Heart left ventricle (tissue), 16 donors: ENCODE measurements at regions of chr1 and their contacts with region 1.

Region 1: DNA sequence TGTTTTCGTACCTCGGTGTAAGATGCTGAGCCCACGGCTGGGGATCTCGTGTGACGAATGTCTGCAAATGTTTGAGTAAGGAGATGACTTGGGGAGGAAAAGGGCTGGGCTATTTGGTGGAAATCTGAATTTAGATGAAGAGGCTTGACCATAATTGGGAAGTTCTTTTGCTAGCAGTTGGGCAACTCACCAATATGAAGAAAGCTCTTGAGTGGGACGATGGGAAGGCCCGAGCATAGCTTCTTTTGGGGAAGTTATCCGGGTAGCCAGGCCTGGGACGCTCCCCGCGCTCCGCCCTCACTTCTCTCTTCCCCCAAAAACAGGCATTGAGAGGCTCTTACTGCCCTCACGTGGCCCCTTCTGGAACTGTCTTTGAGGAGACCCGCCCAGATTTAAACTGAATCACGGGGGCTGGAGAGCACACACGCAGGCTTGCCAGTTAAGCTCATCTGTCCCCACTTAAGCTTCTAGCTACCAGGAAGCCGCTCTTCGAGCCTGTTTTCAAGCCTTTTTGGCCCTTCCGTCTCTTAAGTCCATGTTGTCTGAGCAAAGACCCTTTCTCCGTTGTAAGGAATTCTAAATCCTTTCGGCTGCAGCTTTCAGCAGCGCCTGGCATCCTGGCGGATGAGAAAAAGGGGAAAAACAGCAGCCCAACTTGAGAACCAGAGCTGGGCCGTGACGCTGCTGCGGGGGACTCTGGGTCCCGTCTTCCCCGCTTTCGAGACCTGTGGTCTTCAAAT is 93.1 kb downstream of the NID1 start:
- DNase-seq: peak; percentile 90 to 94 (median 92)
- ATAC-seq: peak; percentile 89 to 96 (median 95)
- H3K4me3 ChIP-seq: peak overlapping the region in 10 of 12 donors; percentile 25 to 58 (median 48)
- H3K27ac ChIP-seq: peak overlapping the region; percentile 77 to 95 (median 90)
- H3K4me1 ChIP-seq: peaks cover 0 to 23% (median 15%) of the 10 kb centered on the region in 12 donors
- H3K27me3 ChIP-seq: no peaks in the 10 kb centered on the region
- CTCF ChIP-seq: peak; percentile 78 to 94 (median 88)
- POLR2A ChIP-seq: peak in 1 of 2 donors; percentile 38

Region 2: DNA sequence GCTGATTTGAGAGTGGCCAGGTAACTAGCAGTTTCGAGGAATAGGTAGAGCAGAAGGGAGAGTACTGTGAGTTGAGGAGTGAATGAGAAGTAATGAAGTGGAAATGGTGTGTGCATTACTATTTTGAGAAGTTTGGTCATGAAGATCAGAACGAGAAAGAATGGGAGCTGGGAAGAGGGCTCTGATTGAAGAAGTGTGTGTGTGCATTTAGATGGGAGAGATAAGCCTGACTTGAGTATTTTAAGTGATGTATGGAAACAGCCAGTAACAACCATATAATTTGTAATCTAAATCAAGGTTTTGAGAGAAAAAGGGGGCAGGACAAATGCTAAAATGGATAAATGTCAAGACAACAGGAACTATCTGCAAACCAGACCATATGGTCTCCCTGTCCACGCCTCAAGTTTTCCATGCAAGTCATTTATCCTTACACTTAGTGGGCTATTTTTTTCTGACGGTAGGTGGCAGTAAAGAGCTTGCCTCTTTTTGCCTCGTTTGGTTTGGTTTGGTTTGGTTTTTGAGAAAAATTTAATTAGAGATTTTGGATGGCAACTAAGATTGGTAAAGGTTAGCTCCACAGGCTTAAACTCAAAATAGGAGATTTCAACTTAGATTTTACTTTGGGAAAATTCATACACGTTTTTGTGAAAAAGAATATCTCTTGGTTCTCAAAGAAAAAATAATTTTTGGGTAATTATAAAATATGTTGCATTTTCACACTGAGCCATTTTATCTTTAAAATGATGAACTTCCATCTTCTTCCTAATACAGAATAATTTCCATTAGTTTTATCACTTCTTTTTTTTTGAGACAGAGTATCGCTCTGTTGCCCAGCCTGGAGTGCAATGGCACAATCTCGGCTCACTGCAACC is 458.0 kb before region 1 on chr1:
- intact Hi-C with region 1: loop called in 6 of 10 experiments (anchors 5 to 10 kb)
- DNase-seq: peak in 2 of 5 donors; percentile 19 to 23
- ATAC-seq: peak in 1 of 4 donors; percentile 56
- H3K4me3 ChIP-seq: no peak overlapping the region
- H3K27ac ChIP-seq: no peak overlapping the region
- H3K4me1 ChIP-seq: no peaks in the 10 kb centered on the region
- H3K27me3 ChIP-seq: no peaks in the 10 kb centered on the region
- CTCF ChIP-seq: peak; percentile 81 to 95 (median 92)
- POLR2A ChIP-seq: no peak

Region 3: GRCh38 chr1:235866913-235867845 is 104.6 kb before region 1 on chr1:
- intact Hi-C with region 1: loop called in 6 of 10 experiments (anchors 1 to 10 kb)
- DNase-seq: peak; percentile 95 to 99 (median 96)
- ATAC-seq: peak; percentile 94 to 99 (median 98)
- H3K4me3 ChIP-seq: peak overlapping the region; percentile 76 to 99 (median 93)
- H3K27ac ChIP-seq: peak overlapping the region; percentile 83 to 98 (median 94)
- H3K4me1 ChIP-seq: peaks cover 0 to 47% (median 22%) of the 10 kb centered on the region in 12 donors
- H3K27me3 ChIP-seq: no peaks in the 10 kb centered on the region
- CTCF ChIP-seq: no peak
- POLR2A ChIP-seq: peak; percentile 20 to 90

Region 4: GRCh38 chr1:235910357-235911299 is 61.1 kb before region 1 on chr1:
- intact Hi-C with region 1: loop called in 1 of 10 experiments (anchors 5 kb)
- DNase-seq: peak in 2 of 5 donors; percentile 37 to 62
- ATAC-seq: peak; percentile 42 to 92 (median 72)
- H3K4me3 ChIP-seq: no peak overlapping the region
- H3K27ac ChIP-seq: peak overlapping the region in 4 of 12 donors; percentile 1 to 73 (median 22)
- H3K4me1 ChIP-seq: peaks cover 0 to 24% (median 0%) of the 10 kb centered on the region in 12 donors
- H3K27me3 ChIP-seq: no peaks in the 10 kb centered on the region
- CTCF ChIP-seq: no peak
- POLR2A ChIP-seq: no peak

Region 5: DNA sequence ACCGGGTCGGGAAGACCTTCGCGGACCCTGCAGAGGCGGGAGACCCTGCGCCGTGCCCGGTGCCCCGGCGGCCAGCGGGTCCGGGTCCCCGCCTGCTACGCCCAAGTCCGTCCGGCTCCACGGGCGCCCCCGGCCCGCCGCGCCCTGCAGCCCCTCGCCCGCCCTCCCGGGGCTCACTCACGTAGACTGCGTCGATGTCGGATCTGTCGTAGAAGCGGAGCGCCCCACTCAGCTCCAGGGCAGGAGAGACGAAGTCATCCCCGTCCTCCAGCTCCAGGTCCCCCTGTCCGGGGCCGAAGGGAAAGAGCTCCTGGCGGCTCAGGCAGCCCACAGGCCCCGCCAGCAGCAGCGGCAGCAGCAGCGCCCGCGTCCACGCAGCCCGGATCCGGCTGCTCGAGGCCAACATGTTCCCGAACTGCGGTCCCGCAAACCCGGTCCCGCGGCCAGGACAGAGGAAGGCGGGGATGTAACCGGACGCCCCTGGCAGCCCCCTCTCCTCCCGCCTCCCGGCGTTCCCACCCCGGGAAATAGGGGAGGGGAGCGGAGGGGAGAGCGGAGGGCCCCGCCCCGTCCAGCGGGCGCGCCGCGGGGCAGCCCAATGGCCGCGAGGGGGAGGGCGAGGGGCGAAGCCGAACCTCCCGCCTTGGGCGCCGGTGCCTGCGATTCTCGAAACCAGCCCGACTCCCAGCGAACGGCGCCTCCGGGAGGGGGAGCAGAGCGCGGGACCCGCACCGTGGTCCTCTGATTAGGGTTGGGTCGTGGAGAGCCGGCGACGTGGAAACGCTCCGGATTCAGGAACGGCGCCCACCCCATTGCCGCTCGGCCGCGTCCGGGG is 93.2 kb after region 1 on chr1 and contains the start of gene NID1:
- intact Hi-C with region 1: loop called in 1 of 10 experiments (anchors 10 kb)
- DNase-seq: peak; percentile 91 to 94 (median 92)
- ATAC-seq: peak; percentile 59 to 85 (median 80)
- H3K4me3 ChIP-seq: peak within 1 kb of the TSS; percentile 71 to 98 (median 89)
- H3K27ac ChIP-seq: peak within 1 kb of the TSS; percentile 93 to 100 (median 97)
- H3K4me1 ChIP-seq: peaks cover 0 to 68% (median 51%) of the 10 kb centered on the region in 12 donors
- H3K27me3 ChIP-seq: peaks cover 0 to 16% (median 0%) of the 10 kb centered on the region in 9 donors
- CTCF ChIP-seq: peak; percentile 22 to 75 (median 52)
- POLR2A ChIP-seq: peak; percentile 72 to 94
- total RNA-seq, gene NID1: 33.3 to 157 (median 61.7) TPM